Heart right ventricle (tissue), 16 donors: ENCODE measurements at regions of chr6 and their contacts with region 1.

Region 1: GRCh38 chr6:6676910-6677441 is 88.5 kb downstream of the LY86 start:
- DNase-seq: peak; percentile 66 to 81
- ATAC-seq: peak; percentile 63 to 91 (median 86)
- H3K4me3 ChIP-seq: no peak overlapping the region
- H3K27ac ChIP-seq: peak overlapping the region; percentile 14 to 77 (median 63)
- H3K4me1 ChIP-seq: peaks cover 4 to 51% (median 27%) of the 10 kb centered on the region in 9 donors
- H3K27me3 ChIP-seq: no peaks in the 10 kb centered on the region
- CTCF ChIP-seq: peak; percentile 91 to 98 (median 96)

Region 2: GRCh38 chr6:6556738-6557505 is 120.1 kb before region 1 on chr6:
- intact Hi-C with region 1: loop called in 1 of 10 experiments (anchors 5 kb)
- DNase-seq: peak; percentile 23 to 49
- ATAC-seq: peak; percentile 70 to 86 (median 76)
- H3K4me3 ChIP-seq: no peak overlapping the region
- H3K27ac ChIP-seq: no peak overlapping the region
- H3K4me1 ChIP-seq: peaks cover 0 to 14% (median 0%) of the 10 kb centered on the region in 9 donors
- H3K27me3 ChIP-seq: peaks cover 0 to 5% (median 0%) of the 10 kb centered on the region in 7 donors
- CTCF ChIP-seq: peak; percentile 80 to 96 (median 93)

Region 3: GRCh38 chr6:7249946-7250643 is 573.1 kb after region 1 on chr6:
- intact Hi-C with region 1: loop called in 2 of 10 experiments (anchors 5 to 10 kb)
- DNase-seq: no peak
- ATAC-seq: no peak
- H3K4me3 ChIP-seq: no peak overlapping the region
- H3K27ac ChIP-seq: no peak overlapping the region
- H3K4me1 ChIP-seq: peaks cover 0 to 35% (median 6%) of the 10 kb centered on the region in 9 donors
- H3K27me3 ChIP-seq: no peaks in the 10 kb centered on the region
- CTCF ChIP-seq: no peak